GM10248 (cell line): ENCODE measurements at regions of chr19 and their contacts with region 1.

Region 1: GRCh38 chr19:51407511-51408131 is 9.8 kb downstream of the SIGLEC10 start:
- DNase-seq: peak; percentile 56
- CTCF ChIP-seq: peak; percentile 32

Region 2: GRCh38 chr19:51242881-51243630 is 164.6 kb before region 1 on chr19:
- CTCF ChIA-PET with region 1: no interaction called
- POLR2A ChIA-PET with region 1: no interaction called
- DNase-seq: no peak
- CTCF ChIP-seq: no peak

Region 3: DNA sequence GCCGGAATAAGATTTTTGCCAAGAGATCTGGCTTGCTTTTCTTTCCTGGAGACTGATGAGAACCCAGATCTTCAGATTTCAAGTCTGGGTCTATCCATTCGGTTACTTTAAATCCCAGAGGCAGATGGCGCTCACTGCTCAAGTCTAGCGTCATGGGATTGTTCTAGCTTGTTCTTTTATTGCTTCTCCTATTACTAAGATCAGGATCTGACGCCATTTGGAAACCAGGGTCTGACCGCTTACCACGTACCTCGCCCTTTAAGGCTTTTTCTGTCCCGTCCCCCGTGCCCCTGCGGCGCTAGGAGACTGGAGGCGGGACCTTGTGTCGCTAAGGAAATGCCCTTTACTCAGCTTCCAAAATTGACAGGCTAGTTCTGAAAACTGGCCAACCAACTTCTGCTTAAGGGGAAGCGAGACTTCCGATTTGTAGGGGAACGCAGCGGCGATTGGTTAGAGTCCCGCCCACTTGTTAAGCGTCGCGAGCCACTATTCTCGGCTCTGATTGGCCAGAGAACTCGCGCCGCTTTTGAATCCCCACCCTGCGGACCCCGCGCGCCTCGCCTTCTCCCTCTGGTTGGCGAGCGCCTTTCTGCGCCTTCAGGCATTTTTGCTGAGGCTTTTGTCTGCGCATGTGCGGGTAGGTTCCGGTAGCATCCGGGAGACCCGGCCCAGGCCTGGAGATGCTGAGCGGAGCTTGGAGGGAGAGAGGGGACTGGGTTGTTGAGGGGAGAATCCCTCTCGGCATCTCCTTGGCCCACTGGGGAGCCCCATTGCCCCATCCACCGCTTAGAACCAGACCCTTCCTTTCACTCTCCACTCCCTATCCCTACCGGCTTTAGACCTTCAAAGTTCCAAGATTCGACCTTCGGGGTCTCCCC is 13.4 kb before region 1 on chr19:
- CTCF ChIA-PET with region 1: interaction called, 168 read pairs
- POLR2A ChIA-PET with region 1: interaction called, 4 read pairs
- DNase-seq: peak; percentile 94
- CTCF ChIP-seq: peak; percentile 4